Naive thymus-derived CD4-positive, alpha-beta T cell (primary cell): ENCODE measurements at regions of chr6 and their contacts with region 1.

Region 1: DNA sequence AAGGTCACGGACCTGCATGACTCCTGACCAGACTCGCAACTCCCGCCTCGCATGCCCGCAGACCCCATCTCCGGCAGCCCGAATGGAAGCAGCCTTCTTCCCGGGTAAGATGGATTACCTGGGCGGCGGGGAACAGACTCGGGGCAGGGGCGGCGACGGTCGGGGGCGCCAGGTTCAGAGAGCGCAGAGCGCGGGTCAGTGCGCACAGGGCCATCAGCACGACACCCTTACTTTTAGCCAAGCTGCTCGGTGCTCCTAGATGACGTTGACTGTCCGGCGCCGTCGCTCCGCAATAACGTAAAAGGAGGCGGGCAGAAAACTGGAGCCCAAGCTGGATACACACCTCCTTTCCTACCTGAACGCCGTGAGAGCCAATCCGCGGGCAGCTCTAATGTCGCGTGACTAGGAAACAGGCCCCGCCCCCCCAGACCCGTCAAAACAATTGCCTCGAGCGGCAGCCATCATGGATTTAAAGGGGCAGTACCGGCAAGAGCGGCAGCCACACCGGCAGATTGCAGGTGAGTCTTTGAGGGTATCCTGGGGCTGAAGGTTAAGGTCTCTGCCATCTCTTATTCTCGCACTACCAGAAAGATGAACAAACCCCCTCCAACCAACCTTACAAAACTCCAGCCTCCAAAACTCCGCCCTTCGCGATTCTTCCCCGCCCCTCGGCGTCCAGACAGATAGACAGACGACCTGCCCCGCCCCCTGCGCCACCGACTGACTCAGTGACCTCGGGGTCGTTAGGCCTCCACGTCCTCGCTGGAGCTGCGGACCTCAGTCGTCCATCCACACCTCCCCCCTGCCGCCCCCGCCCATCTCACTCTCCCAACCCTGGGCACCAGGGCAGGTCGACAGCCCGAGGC is at the starts of genes KLC4 and MRPL2:
- DNase-seq: peak; percentile 79 to 98 (median 95)
- ATAC-seq: peak; percentile 99
- H3K4me3 ChIP-seq: peak within 1 kb of the TSS; percentile 80
- H3K4me3 Mint-ChIP-seq: peak within 1 kb of the TSS; percentile 88 to 100 (median 96)
- H3K27ac ChIP-seq: peak within 1 kb of the TSS; percentile 88
- H3K27ac Mint-ChIP-seq: peak within 1 kb of the TSS; percentile 95 to 100 (median 99)
- H3K4me1 ChIP-seq: peaks cover 0 to 21% of the 10 kb centered on the region in 2 donors
- H3K4me1 Mint-ChIP-seq: peaks cover 28 to 50% (median 45%) of the 10 kb centered on the region in 7 donors
- H3K27me3 ChIP-seq: no peaks in the 10 kb centered on the region
- H3K27me3 Mint-ChIP-seq: no peaks in the 10 kb centered on the region
- total RNA-seq, gene KLC4: 16.5 to 56.9 (median 42.5) TPM
- total RNA-seq, gene MRPL2: 32.0 to 57.5 (median 47.7) TPM

Region 2: DNA sequence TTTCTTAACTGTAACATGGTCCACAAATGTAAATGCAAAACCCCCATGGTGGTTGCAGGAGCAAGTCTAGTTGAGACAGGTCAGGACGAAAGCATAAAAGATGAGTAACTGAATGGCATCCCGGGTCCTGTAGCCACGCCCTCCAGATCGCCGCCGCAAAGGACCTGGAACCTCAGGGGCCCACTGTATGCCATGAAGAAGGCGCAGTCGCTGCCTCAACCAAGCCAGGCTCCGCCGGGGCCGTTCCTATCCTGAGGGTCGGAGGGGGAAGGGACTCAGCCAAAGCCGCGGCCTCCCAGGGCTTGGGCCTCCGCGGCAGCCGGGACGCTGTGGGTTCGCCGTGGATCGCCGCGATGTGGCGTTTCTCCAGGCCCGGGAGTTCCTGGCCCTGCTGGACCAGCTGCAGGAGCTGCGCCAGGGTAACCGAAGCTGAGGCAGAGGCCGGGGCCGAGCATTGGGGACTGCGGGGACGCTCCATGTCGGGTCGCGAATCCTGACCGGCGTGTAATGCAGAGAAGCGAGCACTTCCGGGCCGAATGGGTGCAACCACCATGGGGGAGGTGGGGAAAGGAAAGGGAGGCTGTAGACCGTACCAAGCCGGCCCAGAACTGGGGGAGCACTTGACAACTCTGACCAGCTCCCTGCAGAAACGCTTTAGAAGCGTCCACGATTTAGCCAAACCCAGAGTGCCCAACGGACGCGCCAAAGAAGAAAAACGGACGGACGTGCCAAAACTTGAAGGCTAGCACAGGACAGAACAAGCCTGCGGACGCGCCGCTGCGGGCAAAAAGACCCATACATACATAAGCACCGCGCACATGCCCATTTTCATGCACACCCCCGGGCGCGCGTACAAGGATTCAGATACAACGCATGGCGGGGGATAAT is 168.8 kb before region 1 on chr6:
- CTCF ChIA-PET with region 1: no interaction called
- POLR2A ChIA-PET with region 1: interaction called, 5 read pairs
- intact Hi-C with region 1: loop called in 1 of 2 experiments (anchors 1 kb)
- DNase-seq: peak; percentile 70 to 90 (median 87)
- ATAC-seq: peak; percentile 99
- H3K4me3 ChIP-seq: peak overlapping the region; percentile 89
- H3K4me3 Mint-ChIP-seq: peak overlapping the region; percentile 94 to 100 (median 98)
- H3K27ac ChIP-seq: peak overlapping the region; percentile 87
- H3K27ac Mint-ChIP-seq: peak overlapping the region; percentile 89 to 99 (median 98)
- H3K4me1 ChIP-seq: peaks cover 0 to 8% of the 10 kb centered on the region in 2 donors
- H3K4me1 Mint-ChIP-seq: peaks cover 0 to 26% (median 14%) of the 10 kb centered on the region in 7 donors
- H3K27me3 ChIP-seq: no peaks in the 10 kb centered on the region
- H3K27me3 Mint-ChIP-seq: no peaks in the 10 kb centered on the region

Region 3: GRCh38 chr6:43021270-43022047 is 37.9 kb before region 1 on chr6 and contains the start of gene RRP36:
- CTCF ChIA-PET with region 1: interaction called, 4 read pairs
- POLR2A ChIA-PET with region 1: interaction called, 33 read pairs
- intact Hi-C with region 1: loop called (anchors 1 to 2 kb)
- DNase-seq: peak; percentile 33 to 76 (median 51)
- ATAC-seq: peak; percentile 88
- H3K4me3 ChIP-seq: peak within 1 kb of the TSS; percentile 89
- H3K4me3 Mint-ChIP-seq: peak within 1 kb of the TSS; percentile 95 to 99 (median 98)
- H3K27ac ChIP-seq: peak within 1 kb of the TSS; percentile 81
- H3K27ac Mint-ChIP-seq: peak within 1 kb of the TSS; percentile 74 to 97 (median 93)
- H3K4me1 ChIP-seq: peaks cover 11 to 19% of the 10 kb centered on the region in 2 donors
- H3K4me1 Mint-ChIP-seq: peaks cover 23 to 60% (median 41%) of the 10 kb centered on the region in 7 donors
- H3K27me3 ChIP-seq: no peaks in the 10 kb centered on the region
- H3K27me3 Mint-ChIP-seq: no peaks in the 10 kb centered on the region
- total RNA-seq, gene RRP36: 25.4 to 66.3 (median 48.4) TPM

Region 4: DNA sequence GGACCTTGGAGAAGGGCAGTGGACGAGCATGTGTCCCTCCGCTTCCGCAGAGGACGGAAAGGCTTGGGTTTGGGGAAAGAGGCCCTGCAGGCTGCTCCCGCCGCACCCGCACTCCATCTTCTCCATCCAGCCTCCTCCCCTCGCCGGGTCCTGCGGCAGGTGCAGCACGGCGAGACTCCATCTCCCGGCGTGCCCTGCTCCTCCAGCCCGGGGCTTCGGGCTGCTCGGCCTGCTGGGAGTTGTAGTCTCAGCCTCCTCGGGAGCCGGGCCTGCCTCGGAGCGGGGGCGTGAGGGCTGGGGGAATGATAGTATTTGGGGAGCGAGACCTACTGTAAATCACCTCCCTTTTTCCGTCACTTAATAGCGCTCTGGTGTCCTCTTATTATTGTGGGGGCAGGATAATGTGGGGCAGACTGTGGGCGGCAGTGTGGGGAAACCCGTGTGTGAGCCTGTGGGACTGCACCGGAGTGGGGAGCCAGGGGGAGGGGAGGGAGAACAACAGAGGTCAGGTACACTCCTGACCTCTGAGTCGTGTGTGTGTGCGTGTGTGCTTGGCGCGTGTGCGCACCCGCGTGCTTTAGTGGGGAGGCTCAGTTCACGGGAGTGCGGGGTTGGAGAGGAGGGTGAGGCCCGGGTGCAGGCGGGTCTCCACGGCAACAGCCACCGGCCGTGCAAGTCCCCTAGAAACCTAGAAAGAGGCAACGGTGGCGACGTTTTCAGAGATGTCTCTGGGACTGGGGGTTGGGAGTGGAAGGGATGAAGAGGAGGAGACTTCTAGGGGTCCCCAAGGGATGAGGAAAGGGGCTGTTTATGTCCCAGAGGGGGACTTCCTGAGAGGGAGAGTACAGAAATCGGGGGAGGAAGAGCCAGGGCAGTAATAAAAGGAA is 188.0 kb after region 1 on chr6:
- CTCF ChIA-PET with region 1: no interaction called
- POLR2A ChIA-PET with region 1: no interaction called
- intact Hi-C with region 1: loop called in 1 of 2 experiments (anchors 1 kb)
- DNase-seq: peak; percentile 65 to 81 (median 78)
- ATAC-seq: peak; percentile 95
- H3K4me3 ChIP-seq: peak overlapping the region; percentile 84
- H3K4me3 Mint-ChIP-seq: peak overlapping the region in 9 of 10 donors; percentile 83 to 94 (median 88)
- H3K27ac ChIP-seq: peak overlapping the region; percentile 78
- H3K27ac Mint-ChIP-seq: peak overlapping the region; percentile 76 to 92 (median 89)
- H3K4me1 ChIP-seq: peaks cover 3 to 13% of the 10 kb centered on the region in 2 donors
- H3K4me1 Mint-ChIP-seq: peaks cover 11 to 26% (median 21%) of the 10 kb centered on the region in 7 donors
- H3K27me3 ChIP-seq: peaks cover 3 to 13% of the 10 kb centered on the region in 2 donors
- H3K27me3 Mint-ChIP-seq: peaks cover 7 to 33% (median 14%) of the 10 kb centered on the region in 5 donors

Region 5: DNA sequence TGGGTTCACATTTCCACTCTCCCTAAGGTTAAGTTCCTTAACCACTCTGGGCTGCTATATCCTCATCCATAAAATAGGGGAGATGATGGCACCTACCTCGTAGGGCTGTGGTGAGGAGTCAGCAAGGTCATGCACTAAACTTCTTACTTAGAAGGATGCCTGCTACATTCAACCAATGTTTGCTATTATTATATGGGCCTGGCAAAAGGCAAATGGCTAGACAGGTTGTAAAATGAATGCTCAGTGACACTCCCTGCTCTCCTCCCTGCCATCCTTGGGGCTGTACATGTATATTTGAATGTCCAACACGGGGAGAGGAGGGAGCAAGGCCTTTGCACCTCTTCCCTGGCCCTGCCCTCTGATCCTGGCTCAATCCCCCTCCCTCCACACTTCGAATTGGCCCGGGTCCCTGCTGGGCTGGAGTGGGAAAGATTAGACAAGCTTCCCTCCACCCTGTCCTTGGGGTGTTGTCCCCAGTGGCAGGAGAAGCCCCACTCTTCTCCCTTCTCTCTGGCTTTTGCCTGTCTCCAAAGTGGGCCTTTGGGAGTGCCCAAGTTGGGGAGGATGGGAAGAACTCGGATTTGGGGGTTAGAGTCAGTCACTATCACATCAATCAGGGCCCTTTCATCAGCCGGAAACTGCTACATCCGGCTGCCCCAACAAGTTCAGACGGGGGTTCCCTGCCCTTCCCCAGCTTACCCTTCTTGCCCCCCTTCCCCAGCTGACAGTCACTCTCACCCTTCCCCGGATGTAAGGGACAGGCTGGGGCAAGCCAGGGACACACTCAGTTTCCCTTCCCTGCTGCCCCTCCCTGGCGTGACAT is 674.3 kb after region 1 on chr6:
- CTCF ChIA-PET with region 1: no interaction called
- POLR2A ChIA-PET with region 1: no interaction called
- intact Hi-C with region 1: no loop called
- DNase-seq: peak in 3 of 9 donors; percentile 23 to 54 (median 44)
- ATAC-seq: peak; percentile 89
- H3K4me3 ChIP-seq: no peak overlapping the region
- H3K4me3 Mint-ChIP-seq: peak overlapping the region in 2 of 10 donors; percentile 26 to 35
- H3K27ac ChIP-seq: no peak overlapping the region
- H3K27ac Mint-ChIP-seq: peak overlapping the region in 4 of 9 donors; percentile 24 to 60 (median 42)
- H3K4me1 ChIP-seq: peaks cover 6 to 10% of the 10 kb centered on the region in 2 donors
- H3K4me1 Mint-ChIP-seq: peaks cover 0 to 21% (median 10%) of the 10 kb centered on the region in 7 donors
- H3K27me3 ChIP-seq: no peaks in the 10 kb centered on the region
- H3K27me3 Mint-ChIP-seq: peaks cover 0 to 2% (median 0%) of the 10 kb centered on the region in 5 donors